ENCODE measurements at regions of chr20 and their contacts with region 1.

Region 1: DNA sequence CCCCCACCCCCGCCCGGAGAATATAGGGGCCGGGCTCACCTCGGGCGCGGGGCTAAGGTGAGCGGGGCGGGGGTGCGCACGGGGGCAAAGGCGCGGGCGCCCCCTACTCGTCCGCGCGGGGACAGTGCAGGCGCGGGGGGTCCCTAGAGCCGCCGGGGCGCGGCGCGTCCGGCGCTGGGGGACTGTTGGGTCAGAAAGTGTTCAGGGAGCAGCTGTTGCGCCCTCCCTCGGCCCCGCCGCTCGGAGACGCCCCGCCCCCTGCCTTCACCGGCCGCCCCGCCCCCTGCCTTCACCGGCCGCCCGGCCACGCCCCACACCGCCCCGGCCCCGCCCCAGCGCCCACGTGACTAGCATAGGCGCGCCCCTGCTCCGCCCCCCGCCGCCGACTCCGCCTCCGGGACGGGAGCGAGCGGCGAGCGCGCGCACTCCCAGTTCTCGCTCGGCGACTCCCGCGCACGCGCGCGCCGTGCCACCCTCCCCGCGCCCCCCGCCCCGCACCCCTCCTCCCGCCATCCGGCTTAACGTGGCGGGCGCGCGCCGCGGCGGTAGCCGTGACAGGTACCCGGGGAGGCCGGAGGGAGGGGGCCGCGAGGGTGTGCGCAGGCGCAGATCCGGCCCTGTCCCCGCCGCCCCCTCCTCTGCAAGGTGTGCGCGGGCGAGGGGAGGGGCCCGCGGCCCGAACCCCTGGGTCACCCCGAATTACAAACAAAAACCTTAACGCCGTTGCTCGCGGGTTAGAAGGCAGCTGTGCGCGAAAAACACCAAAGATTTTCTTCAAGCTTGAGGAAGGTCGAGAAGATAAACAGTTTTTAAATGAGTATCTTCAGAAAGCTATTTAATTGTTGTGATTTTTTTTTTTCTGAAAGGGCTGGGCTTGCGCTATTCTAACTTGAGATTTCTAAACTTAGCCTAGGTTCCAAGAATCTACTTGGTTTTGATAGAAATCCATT is 704 bp upstream of the ZNF217 start:
- DNase-seq: peak; percentile 100
- ATAC-seq: peak; percentile 79
- H3K4me3 Mint-ChIP-seq: peak overlapping the region; percentile 97
- H3K27ac Mint-ChIP-seq: peak overlapping the region; percentile 95
- H3K4me1 Mint-ChIP-seq: peaks cover 45% of the 10 kb centered on the region
- H3K27me3 Mint-ChIP-seq: no peaks in the 10 kb centered on the region

Region 2: GRCh38 chr20:53578492-53579222 is 15.7 kb before region 1 on chr20:
- POLR2A ChIA-PET with region 1: interaction called, 109 read pairs
- DNase-seq: no peak
- ATAC-seq: peak; percentile 21
- H3K4me3 Mint-ChIP-seq: peak overlapping the region; percentile 96
- H3K27ac Mint-ChIP-seq: peak overlapping the region; percentile 92
- H3K4me1 Mint-ChIP-seq: peaks cover 71% of the 10 kb centered on the region
- H3K27me3 Mint-ChIP-seq: no peaks in the 10 kb centered on the region

Region 3: GRCh38 chr20:53623454-53624211 is 29.3 kb after region 1 on chr20:
- POLR2A ChIA-PET with region 1: interaction called, 38 read pairs
- DNase-seq: no peak
- ATAC-seq: peak; percentile 55
- H3K4me3 Mint-ChIP-seq: peak overlapping the region; percentile 80
- H3K27ac Mint-ChIP-seq: peak overlapping the region; percentile 98
- H3K4me1 Mint-ChIP-seq: peaks cover 41% of the 10 kb centered on the region
- H3K27me3 Mint-ChIP-seq: no peaks in the 10 kb centered on the region

Region 4: DNA sequence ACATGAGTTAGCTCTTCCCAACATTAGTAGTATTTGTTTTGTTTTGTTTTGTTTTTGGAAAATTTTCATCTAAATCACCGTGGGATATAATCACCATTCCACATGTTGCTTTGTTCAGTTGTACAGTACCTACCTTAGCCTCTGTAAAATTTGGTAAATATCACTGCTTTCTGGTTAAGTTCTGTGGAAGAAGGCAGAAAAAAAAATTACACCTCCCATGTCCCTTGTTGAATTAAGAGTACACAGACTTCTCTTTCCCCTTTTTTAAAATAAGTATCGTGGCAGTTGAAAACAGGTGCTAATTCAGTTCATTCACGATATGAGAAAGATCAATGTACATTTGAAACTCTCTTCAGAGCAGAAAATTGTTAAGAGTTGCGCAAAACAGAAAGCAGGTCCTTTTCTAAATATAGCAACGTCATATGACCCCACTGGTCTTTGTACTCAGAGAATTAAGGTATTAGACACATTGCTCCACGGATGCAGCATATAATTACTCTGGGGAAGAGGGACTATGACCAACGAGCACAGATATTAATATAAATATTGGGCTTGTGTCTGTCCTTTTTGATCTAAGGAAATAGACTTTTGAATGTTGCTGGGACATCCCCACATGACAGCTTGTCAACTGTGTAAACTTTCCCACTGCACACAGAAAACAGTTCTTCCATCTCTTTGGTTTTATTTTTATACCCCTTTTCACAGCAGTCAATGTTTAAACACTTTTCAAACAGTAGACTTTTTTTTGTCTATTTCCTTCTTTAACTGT is 57.9 kb after region 1 on chr20:
- POLR2A ChIA-PET with region 1: interaction called, 18 read pairs
- DNase-seq: no peak
- ATAC-seq: peak; percentile 76
- H3K4me3 Mint-ChIP-seq: peak overlapping the region; percentile 81
- H3K27ac Mint-ChIP-seq: peak overlapping the region; percentile 98
- H3K4me1 Mint-ChIP-seq: peaks cover 39% of the 10 kb centered on the region
- H3K27me3 Mint-ChIP-seq: no peaks in the 10 kb centered on the region

Region 5: DNA sequence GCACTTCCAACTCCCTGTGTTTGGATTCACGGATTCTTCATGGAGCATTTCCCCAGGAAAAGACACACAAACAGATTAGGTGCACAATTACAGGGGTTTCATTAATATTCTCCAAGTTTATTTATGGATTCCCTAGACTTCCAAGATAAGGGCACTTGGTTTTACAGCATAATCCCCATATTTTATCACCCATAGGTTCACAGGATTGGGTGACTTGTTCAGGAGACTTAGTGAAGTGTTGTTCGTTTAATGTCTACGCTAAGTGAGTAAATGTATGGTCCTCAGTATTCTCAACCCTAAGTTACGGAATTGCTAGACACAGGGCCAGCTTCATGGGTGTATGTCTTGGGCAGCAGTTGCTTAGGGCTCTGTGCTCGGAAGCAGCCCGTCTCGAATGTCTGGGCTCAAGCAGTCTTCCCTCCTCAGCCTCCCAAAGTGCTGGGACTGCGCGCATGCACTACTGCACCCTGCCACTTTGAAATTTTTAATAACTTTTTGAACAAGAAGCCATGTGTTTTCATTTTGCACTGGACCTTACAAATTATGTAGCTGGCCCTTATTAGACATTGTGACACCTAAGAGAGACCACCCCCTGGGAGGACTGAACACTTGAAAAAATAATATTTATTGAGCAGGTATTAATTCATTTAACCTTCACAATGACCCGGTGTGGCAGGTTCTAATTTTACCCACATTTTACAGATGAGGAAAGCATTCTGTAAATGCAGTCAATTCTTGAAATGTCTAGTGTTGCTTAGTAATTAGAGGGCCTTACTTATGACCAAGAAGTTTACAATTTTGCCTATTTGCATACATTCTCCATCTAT is 90.8 kb after region 1 on chr20:
- POLR2A ChIA-PET with region 1: interaction called, 14 read pairs
- DNase-seq: no peak
- ATAC-seq: no peak
- H3K4me3 Mint-ChIP-seq: peak overlapping the region; percentile 70
- H3K27ac Mint-ChIP-seq: peak overlapping the region; percentile 96
- H3K4me1 Mint-ChIP-seq: peaks cover 33% of the 10 kb centered on the region
- H3K27me3 Mint-ChIP-seq: no peaks in the 10 kb centered on the region

Region 6: DNA sequence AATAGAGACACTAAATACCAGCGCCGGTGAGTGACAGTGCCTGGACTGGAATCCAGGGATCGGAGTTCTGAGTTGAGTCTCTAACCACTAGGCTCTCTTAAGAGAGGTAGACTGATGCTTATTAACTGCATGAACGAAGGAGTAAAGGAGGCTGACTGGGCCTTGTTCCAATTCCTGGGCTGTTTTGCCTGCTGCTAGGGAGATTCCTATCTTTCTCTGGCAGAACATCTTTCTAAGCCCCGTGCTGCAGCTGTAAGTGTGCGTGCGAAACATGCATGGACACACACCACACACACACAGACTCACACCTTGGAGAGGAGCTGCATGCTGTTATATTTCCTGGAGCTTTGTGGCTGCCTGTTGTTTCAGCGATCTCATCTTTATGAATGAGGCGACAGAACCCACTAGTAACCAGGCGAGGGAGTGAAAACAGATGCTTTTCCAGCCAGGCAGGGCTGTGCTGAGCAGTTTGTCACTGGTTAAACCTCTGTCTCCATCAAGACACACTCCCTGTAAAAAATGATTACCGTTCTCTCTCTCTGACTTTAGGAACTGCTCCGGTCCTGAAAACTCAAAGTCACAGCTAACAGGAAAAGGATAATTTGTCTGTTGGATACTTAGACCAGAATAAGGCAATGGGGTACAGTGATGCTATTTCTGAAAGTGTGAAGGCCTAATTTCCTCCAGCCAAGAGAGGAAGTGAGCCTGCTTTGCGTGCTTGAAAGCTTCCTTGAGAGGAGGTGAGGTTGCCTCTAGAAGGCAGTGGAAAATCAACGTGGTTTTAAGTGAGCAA is 156.7 kb after region 1 on chr20:
- POLR2A ChIA-PET with region 1: interaction called, 21 read pairs
- DNase-seq: peak; percentile 58
- ATAC-seq: peak; percentile 66
- H3K4me3 Mint-ChIP-seq: peak overlapping the region; percentile 68
- H3K27ac Mint-ChIP-seq: peak overlapping the region; percentile 97
- H3K4me1 Mint-ChIP-seq: peaks cover 61% of the 10 kb centered on the region
- H3K27me3 Mint-ChIP-seq: no peaks in the 10 kb centered on the region